Heart right ventricle (tissue), 16 donors: ENCODE measurements at regions of chr20 and their contacts with region 1.

Region 1: DNA sequence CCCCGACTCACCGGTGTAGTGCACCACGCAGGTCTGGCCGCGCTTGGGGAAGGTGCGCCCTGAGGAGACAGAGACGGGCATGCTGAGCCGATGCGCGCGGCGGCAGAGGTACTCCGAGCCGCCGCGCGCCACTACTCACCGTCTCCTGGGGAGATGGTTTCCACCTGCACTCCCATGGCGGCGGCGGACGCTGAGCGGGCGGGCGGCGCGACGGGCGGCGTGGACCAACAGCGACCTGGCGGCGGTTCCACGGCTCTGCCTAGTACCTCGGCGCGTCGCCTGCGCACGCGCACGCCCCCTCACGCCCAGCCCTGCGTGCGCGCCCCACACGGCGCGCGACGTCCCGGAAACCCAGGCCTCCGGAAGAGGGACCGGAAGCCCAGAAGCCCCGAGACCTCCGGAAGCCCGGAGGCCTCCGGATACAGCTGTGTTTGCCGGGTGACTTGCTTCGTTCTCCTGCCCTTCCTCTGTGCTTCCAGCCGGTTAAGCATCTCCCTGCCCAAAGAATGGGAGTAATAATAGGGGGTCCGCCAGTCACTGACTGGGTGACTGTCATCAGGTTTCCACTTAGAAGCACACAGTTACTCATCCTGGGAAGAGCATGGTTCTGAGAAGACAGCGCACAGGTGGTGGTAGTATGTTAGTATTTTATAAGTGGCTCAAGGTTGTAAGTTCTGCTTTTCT is at the start of gene FKBP1A:
- DNase-seq: peak; percentile 90 to 94
- ATAC-seq: peak; percentile 94 to 99 (median 96)
- H3K4me3 ChIP-seq: peak within 1 kb of the TSS; percentile 60 to 87 (median 78)
- H3K27ac ChIP-seq: peak within 1 kb of the TSS; percentile 75 to 96 (median 89)
- H3K4me1 ChIP-seq: peaks cover 32 to 72% (median 53%) of the 10 kb centered on the region in 9 donors
- H3K27me3 ChIP-seq: peaks cover 0 to 11% (median 6%) of the 10 kb centered on the region in 7 donors
- CTCF ChIP-seq: peak in 7 of 9 donors; percentile 23 to 55 (median 34)
- total RNA-seq, gene FKBP1A: 112 to 276 (median 140) TPM

Region 2: DNA sequence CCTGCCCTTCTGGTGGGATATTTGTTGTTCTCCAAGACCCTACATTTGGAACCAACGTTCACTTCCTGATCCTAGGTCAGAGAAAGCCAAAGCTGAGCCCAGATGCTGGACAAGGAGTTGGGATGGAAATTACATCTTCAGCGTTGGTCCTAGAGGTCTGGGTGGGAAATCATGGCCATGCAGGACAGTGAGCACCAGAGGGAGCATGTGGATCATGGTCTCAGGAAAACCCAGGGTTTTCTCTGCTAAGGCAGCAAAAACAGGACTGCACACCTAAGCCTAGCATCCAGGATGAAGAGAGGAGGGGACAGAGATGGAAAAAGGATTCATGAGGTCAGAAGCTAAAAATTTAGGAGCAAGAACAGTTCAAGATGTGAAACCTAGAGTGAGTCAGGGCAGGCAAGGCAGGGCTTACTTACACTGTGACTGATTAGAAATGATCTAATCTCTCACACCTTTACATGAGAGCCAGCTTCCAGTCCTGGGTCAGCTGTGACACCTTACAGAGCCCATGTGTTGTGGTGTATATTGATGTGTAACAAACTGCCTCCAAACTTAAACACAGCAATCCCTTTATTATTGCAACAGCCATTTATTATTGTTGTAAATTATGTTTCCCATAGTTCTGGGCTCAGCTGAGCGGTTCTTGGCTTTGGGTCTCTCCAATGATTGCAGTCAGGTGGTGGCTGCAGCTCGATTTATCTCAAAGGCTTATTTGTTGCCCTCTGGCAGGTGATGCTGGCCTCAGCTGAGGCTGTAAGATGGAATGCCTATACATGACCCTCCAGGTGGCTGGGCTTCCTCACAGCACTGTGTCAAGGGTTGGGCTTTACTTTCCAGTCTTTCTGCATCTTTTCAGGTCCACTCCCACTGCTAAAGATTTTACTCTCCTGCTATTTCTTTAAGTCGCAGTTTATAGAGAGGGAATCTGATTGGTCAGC is 183.2 kb before region 1 on chr20:
- intact Hi-C with region 1: no loop called
- DNase-seq: no peak
- ATAC-seq: no peak
- H3K4me3 ChIP-seq: no peak overlapping the region
- H3K27ac ChIP-seq: no peak overlapping the region
- H3K4me1 ChIP-seq: peaks cover 0 to 18% (median 0%) of the 10 kb centered on the region in 9 donors
- H3K27me3 ChIP-seq: peaks cover 0 to 18% (median 0%) of the 10 kb centered on the region in 7 donors
- CTCF ChIP-seq: peak in 1 of 9 donors; percentile 12

Region 3: DNA sequence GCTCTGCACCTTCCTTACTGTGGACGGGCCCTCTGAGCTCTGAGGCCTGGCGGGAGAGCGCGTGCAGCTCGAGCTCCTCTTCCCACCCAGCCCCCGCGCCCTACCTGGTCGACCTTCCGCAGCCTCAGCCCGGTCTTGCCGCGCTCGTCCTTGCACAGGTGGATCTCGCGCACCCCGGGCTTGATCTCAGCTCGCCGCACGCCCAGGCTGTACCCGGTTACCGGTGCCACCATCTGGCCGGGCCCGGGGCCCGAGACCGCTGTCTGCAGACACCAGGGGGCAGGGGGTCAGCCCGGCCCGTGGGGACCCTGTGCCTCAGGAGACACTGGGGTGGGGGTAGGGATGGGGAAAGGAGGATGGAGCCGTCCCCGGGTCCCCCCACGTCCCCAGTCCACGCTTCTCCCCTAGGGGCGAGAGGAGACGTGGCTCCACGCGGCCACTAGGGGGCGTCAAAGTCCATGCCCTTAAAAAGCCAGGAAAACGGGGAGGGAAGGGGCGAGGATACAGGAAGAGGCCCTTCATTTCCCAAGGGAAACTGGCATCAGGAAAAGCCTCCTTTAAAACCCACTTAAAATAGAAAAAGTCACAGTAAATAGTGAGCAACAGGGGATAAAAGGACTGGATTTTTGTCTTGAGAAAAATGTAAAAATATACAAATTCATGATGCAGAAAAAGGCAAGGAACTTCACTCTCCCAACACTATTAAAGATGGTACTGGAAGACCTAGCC is 79.6 kb before region 1 on chr20:
- intact Hi-C with region 1: loop called in 5 of 10 experiments (anchors 2 to 5 kb)
- DNase-seq: peak; percentile 79 to 85
- ATAC-seq: peak; percentile 74 to 97 (median 90)
- H3K4me3 ChIP-seq: peak overlapping the region in 9 of 10 donors; percentile 2 to 40 (median 33)
- H3K27ac ChIP-seq: peak overlapping the region in 5 of 10 donors; percentile 0 to 33 (median 28)
- H3K4me1 ChIP-seq: peaks cover 0 to 18% (median 13%) of the 10 kb centered on the region in 9 donors
- H3K27me3 ChIP-seq: no peaks in the 10 kb centered on the region
- CTCF ChIP-seq: peak; percentile 98 to 100 (median 99)

Region 4: DNA sequence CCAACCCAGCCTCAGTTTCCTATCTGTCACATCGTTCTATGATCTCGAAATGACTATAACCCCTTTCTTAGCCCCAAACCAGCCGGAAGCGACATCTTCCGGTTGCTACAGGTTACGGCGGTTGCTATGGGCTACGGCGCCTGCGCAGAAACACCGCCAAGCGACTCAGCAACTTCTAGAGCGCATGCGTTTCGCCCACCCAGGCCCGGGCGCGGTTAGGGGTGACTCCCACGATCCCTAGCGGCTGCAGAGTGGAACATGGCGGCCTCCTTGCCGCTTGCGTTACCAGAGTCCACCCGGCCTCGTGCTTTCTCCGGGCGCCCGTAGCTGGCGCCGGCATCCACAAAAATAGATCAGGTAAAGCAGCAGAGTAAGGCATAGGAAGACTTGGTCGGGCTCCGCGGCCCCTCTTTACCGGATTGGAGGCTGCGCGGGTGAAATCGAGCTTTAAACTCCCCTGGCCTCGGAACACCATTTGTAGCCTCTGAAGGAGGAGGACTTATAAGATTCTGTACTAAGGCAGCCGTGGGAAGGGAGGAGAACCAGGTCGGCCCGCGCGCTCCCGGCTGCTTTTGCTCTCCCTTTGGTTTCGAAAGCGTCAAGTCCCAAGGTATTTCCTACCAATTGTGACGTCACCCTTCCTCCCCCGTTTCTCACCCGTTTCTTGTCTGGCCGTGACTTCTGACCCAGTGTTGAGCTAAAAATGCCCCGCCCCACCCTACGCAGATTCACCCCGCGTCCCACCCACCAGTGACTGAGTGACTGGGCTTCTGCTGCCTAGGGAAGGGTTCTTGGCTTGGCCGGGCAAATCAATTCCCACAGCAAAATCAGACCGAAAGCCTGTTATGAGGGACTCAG is 67.6 kb before region 1 on chr20:
- intact Hi-C with region 1: loop called in 8 of 10 experiments (anchors 1 to 5 kb)
- DNase-seq: peak; percentile 98 to 99
- ATAC-seq: peak; percentile 86 to 96 (median 92)
- H3K4me3 ChIP-seq: peak overlapping the region; percentile 54 to 93 (median 84)
- H3K27ac ChIP-seq: peak overlapping the region; percentile 89 to 100 (median 99)
- H3K4me1 ChIP-seq: peaks cover 24 to 92% (median 80%) of the 10 kb centered on the region in 9 donors
- H3K27me3 ChIP-seq: no peaks in the 10 kb centered on the region
- CTCF ChIP-seq: peak in 7 of 9 donors; percentile 22 to 47 (median 32)

Region 5: DNA sequence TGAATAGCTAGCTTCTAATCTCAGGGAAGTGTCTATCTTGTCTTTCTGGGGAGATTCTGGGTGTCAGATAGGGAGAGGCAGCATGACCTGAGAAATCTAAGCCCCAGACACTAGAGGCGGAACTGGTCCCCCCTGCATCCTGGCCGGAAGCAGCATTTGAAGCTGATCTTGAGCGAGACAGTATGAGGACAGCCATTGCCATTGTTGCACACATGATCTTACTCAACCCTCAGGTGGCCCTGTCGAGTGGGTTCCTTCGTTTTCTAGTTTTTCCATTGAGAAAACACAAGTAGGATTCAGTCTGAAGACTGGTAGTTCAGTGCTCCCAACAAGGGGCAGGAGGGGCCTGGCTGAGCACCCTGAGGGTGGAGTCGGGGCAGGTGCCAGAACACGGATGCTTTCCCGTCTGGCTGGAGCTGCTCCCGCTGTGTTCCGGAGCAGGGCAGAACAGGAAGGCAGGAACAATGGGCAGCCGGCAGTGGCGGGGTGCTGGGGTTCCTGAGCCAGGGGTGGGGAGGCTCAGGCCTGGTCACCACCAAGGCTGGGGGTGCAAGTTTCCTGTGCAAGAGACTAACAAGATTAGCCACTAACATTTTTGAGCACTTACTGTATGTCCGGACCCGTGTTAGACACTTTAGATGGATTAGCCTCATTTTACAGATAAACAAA is 56.1 kb before region 1 on chr20:
- intact Hi-C with region 1: loop called in 3 of 10 experiments (anchors 2 to 5 kb)
- DNase-seq: peak; percentile 86 to 90
- ATAC-seq: peak; percentile 87 to 97 (median 94)
- H3K4me3 ChIP-seq: peak overlapping the region in 2 of 10 donors; percentile 2 to 8
- H3K27ac ChIP-seq: peak overlapping the region; percentile 54 to 89 (median 78)
- H3K4me1 ChIP-seq: peaks cover 12 to 56% (median 44%) of the 10 kb centered on the region in 9 donors
- H3K27me3 ChIP-seq: no peaks in the 10 kb centered on the region
- CTCF ChIP-seq: no peak

Region 6: GRCh38 chr20:1434571-1435336 is 41.8 kb after region 1 on chr20:
- intact Hi-C with region 1: no loop called
- DNase-seq: peak in 1 of 2 donors; percentile 16
- ATAC-seq: peak in 6 of 8 donors; percentile 41 to 78 (median 56)
- H3K4me3 ChIP-seq: no peak overlapping the region
- H3K27ac ChIP-seq: peak overlapping the region in 1 of 10 donors; percentile 51
- H3K4me1 ChIP-seq: peaks cover 0 to 24% (median 0%) of the 10 kb centered on the region in 9 donors
- H3K27me3 ChIP-seq: peaks cover 0 to 6% (median 0%) of the 10 kb centered on the region in 7 donors
- CTCF ChIP-seq: no peak

Region 7: GRCh38 chr20:1466211-1467081 is 73.5 kb after region 1 on chr20 and contains the start of gene NSFL1C:
- intact Hi-C with region 1: loop called in 1 of 10 experiments (anchors 5 kb)
- DNase-seq: peak; percentile 94 to 96
- ATAC-seq: peak; percentile 96 to 99 (median 98)
- H3K4me3 ChIP-seq: peak within 1 kb of the TSS; percentile 79 to 99 (median 95)
- H3K27ac ChIP-seq: peak within 1 kb of the TSS; percentile 73 to 96 (median 92)
- H3K4me1 ChIP-seq: peaks cover 0 to 67% (median 43%) of the 10 kb centered on the region in 9 donors
- H3K27me3 ChIP-seq: no peaks in the 10 kb centered on the region
- CTCF ChIP-seq: peak; percentile 87 to 100 (median 99)
- total RNA-seq, gene NSFL1C: 54.6 to 75.6 (median 63.8) TPM

Region 8: DNA sequence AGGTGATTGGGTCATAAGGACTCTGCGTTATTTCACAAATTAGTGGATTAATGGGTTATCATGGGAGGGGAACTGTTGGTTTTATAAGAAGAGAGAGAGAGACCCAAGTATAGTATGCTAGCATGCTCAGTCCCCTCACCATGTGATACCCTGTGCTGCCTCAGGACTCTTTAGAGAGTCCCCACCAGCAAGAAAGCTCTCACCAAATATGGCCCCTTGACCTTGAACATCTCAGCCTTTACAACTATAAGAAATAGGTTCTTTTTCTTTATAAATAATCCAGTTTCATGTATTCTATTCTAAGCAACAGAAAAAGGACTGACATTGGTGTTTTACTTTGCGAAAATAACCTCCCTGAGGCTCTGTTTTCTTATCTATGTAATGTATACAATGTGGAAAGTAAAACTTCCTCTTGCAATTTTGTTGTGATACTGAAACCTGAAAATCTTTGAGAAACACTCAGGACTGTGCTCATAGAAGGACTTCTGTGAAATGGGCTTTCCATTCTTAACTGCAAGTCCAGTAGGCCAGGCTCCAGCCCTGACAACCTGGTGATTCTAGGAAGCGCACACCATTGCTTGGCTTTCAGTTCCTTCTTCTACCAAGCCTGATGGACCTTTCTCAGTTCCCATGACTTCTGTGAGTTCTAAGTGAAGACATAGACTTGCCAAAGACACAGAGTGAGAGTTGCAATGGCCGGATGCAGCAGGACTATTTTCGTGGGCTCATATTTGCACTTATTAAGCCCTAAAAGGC is 142.6 kb after region 1 on chr20:
- intact Hi-C with region 1: no loop called
- DNase-seq: no peak
- ATAC-seq: peak in 4 of 8 donors; percentile 26 to 39 (median 34)
- H3K4me3 ChIP-seq: no peak overlapping the region
- H3K27ac ChIP-seq: peak overlapping the region in 1 of 10 donors; percentile 94
- H3K4me1 ChIP-seq: peaks cover 0 to 43% (median 0%) of the 10 kb centered on the region in 9 donors
- H3K27me3 ChIP-seq: peaks cover 0 to 10% (median 0%) of the 10 kb centered on the region in 7 donors
- CTCF ChIP-seq: no peak

Region 9: GRCh38 chr20:1619861-1620444 is 227.0 kb after region 1 on chr20 and contains the start of gene SIRPB1:
- intact Hi-C with region 1: no loop called
- DNase-seq: no peak
- ATAC-seq: peak in 6 of 8 donors; percentile 19 to 61 (median 50)
- H3K4me3 ChIP-seq: peak within 1 kb of the TSS in 1 of 10 donors; percentile 33
- H3K27ac ChIP-seq: peak within 1 kb of the TSS in 1 of 10 donors; percentile 89
- H3K4me1 ChIP-seq: peaks cover 0 to 73% (median 0%) of the 10 kb centered on the region in 9 donors
- H3K27me3 ChIP-seq: peaks cover 0 to 3% (median 0%) of the 10 kb centered on the region in 7 donors
- CTCF ChIP-seq: no peak
- total RNA-seq, gene SIRPB1: 0.37 to 6.9 (median 1.8) TPM in 9 of 10 donors, not detected in the other